ENCODE measurements at regions of chr4 and their contacts with region 1.

Region 1: GRCh38 chr4:139167774-139168444 is 9.1 kb downstream of the ELF2 start:
- DNase-seq: no peak
- ATAC-seq: peak; percentile 62 to 84 (median 78)
- H3K4me3 ChIP-seq: no peak overlapping the region
- H3K27ac ChIP-seq: peak overlapping the region; percentile 28
- H3K4me1 ChIP-seq: peaks cover 47% of the 10 kb centered on the region
- H3K27me3 ChIP-seq: no peaks in the 10 kb centered on the region
- CTCF ChIP-seq: peak; percentile 60

Region 2: GRCh38 chr4:138761638-138762220 is 406.2 kb before region 1 on chr4:
- intact Hi-C with region 1: no loop called
- DNase-seq: no peak
- ATAC-seq: no peak
- H3K4me3 ChIP-seq: no peak overlapping the region
- H3K27ac ChIP-seq: no peak overlapping the region
- H3K4me1 ChIP-seq: no peaks in the 10 kb centered on the region
- H3K27me3 ChIP-seq: no peaks in the 10 kb centered on the region
- CTCF ChIP-seq: no peak

Region 3: GRCh38 chr4:138875891-138876613 is 291.9 kb before region 1 on chr4:
- intact Hi-C with region 1: no loop called
- DNase-seq: no peak
- ATAC-seq: no peak
- H3K4me3 ChIP-seq: no peak overlapping the region
- H3K27ac ChIP-seq: no peak overlapping the region
- H3K4me1 ChIP-seq: no peaks in the 10 kb centered on the region
- H3K27me3 ChIP-seq: no peaks in the 10 kb centered on the region
- CTCF ChIP-seq: no peak

Region 4: GRCh38 chr4:139099366-139099982 is 68.4 kb before region 1 on chr4:
- intact Hi-C with region 1: loop called (anchors 2 to 5 kb)
- DNase-seq: peak; percentile 55 to 68
- ATAC-seq: peak; percentile 79 to 90 (median 86)
- H3K4me3 ChIP-seq: no peak overlapping the region
- H3K27ac ChIP-seq: no peak overlapping the region
- H3K4me1 ChIP-seq: no peaks in the 10 kb centered on the region
- H3K27me3 ChIP-seq: no peaks in the 10 kb centered on the region
- CTCF ChIP-seq: peak; percentile 90

Measured in psoas muscle (tissue), 8 donors.